Activated naive CD4-positive, alpha-beta T cell treated with anti-CD3 and anti-CD28 coated beads for 36 hours (primary cell): ENCODE measurements at regions of chr2 and their contacts with region 1.

Region 1: GRCh38 chr2:199911052-199911876 is at the start of gene C2orf69:
- DNase-seq: peak; percentile 98
- H3K4me3 Mint-ChIP-seq: peak within 1 kb of the TSS; percentile 96
- H3K27ac Mint-ChIP-seq: peak within 1 kb of the TSS; percentile 91
- H3K4me1 Mint-ChIP-seq: peaks cover 24% of the 10 kb centered on the region
- H3K27me3 Mint-ChIP-seq: peaks cover 2% of the 10 kb centered on the region
- total RNA-seq, gene C2orf69: 18.5 to 20.6 TPM

Region 2: DNA sequence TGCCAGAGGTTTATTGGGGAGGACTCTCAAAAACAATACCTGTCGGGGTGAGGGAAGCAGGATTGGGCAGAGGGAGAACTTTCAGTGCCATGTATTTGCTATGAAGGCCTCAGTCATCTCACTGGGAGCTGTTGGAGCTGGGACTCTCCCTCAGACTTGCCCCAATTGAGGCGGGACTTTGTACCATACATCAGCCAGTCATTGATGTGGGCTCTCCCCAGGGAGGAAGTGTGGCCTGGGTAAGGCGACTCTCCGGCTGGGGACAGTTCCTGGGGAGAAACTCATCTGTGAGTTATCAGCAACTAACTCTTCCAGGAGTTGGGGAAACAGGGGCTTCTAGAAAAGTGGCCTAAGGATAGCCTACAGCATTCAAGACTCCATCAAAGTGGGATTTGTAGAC is 126.8 kb before region 1 on chr2:
- CTCF ChIA-PET with region 1: no interaction called
- intact Hi-C with region 1: no loop called
- DNase-seq: no peak
- H3K4me3 Mint-ChIP-seq: no peak overlapping the region
- H3K27ac Mint-ChIP-seq: no peak overlapping the region
- H3K4me1 Mint-ChIP-seq: no peaks in the 10 kb centered on the region
- H3K27me3 Mint-ChIP-seq: no peaks in the 10 kb centered on the region

Region 3: DNA sequence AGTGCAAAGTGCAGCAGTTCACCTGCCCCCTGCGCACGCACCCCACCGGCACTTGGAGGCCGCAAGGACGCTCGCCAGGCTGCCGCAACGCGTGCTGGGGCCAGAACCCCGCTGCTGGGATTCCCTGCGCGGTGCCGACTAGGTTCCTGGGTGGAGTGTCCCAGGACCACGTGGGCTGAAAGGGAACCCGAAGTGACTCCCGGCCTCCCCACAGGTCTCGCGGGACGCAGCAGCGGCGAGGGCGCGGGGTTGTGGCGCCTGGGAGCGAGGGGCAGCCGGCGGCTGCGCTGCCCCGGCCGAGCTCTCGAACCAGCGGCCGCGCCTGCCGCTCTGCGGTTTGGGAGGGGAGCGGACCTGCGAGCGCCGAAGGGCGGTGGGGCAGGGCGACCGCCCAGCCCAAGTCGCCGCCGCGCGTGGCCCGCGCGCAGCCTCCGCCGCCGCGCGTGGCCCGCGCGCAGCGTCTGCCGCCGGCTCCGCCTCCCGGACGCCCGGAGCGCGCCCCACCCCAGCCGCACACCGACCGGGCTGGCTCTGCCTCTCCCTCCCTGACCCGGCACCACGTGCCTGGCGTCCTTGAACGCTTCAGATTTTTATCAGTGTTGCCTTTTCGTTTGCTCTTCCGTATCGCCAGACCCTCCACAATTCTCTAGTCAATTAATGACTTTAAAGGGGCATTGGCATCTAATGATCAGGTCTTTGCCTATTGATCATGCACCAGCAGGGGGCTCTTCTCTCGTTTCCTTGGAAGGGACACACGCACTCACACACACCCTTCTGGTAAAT is 60.4 kb before region 1 on chr2 and contains the start of gene FTCDNL1:
- CTCF ChIA-PET with region 1: no interaction called
- intact Hi-C with region 1: loop called (anchors 1 kb)
- DNase-seq: peak; percentile 67
- H3K4me3 Mint-ChIP-seq: peak within 1 kb of the TSS; percentile 96
- H3K27ac Mint-ChIP-seq: peak within 1 kb of the TSS; percentile 88
- H3K4me1 Mint-ChIP-seq: peaks cover 9% of the 10 kb centered on the region
- H3K27me3 Mint-ChIP-seq: no peaks in the 10 kb centered on the region
- total RNA-seq, gene FTCDNL1: 3.8 to 5.2 TPM

Region 4: DNA sequence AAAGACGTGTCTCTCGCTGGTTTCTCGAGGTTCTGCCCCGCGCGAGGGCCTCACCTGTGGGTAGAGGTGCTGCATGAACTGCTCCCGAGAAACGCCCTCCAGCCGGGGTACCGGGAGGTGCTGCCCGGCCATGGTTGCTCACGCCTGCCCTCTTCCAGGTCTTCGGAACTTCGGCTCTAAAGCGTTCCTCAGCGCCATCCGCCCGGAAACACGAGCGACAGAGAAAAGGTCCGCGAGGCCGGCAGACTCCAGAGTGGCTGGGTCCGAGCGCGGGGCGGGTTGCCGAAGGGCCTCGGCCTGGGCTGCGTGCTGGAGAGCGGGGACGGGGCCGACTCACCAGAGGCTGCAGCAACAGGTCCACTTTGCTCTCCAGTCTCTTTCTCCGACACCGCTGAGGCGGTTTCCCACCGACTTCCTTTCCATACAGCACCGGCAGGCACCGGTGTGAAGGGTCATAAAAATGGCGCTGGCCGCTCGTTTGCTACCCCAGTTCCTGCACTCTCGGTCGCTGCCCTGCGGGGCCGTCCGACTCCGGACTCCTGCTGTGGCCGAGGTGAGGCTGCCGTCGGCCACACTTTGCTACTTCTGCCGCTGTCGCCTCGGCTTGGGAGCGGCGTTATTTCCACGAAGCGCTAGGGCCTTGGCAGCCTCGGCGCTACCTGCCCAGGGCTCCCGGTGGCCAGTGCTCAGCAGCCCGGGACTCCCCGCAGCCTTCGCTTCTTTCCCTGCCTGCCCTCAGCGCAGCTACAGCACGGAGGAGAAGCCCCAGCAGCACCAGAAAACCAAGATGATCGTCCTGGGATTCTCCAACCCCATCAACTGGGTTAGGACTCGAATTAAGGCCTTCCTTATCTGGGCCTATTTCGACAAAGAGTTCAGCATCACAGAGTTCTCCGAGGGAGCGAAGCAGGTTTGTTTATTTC is 44.3 kb after region 1 on chr2 and contains the starts of genes MAIP1 and TYW5:
- CTCF ChIA-PET with region 1: interaction called, 3 read pairs
- intact Hi-C with region 1: loop called (anchors 1 kb)
- DNase-seq: peak; percentile 82
- H3K4me3 Mint-ChIP-seq: peak within 1 kb of the TSS; percentile 98
- H3K27ac Mint-ChIP-seq: peak within 1 kb of the TSS; percentile 92
- H3K4me1 Mint-ChIP-seq: peaks cover 45% of the 10 kb centered on the region
- H3K27me3 Mint-ChIP-seq: no peaks in the 10 kb centered on the region
- total RNA-seq, gene MAIP1: 28.6 to 30.0 TPM
- total RNA-seq, gene TYW5: 7.8 to 7.9 TPM

Region 5: GRCh38 chr2:200306196-200306930 is 395.1 kb after region 1 on chr2 and contains the start of gene SPATS2L:
- CTCF ChIA-PET with region 1: no interaction called
- intact Hi-C with region 1: loop called (anchors 5 kb)
- DNase-seq: peak; percentile 64
- H3K4me3 Mint-ChIP-seq: peak within 1 kb of the TSS; percentile 85
- H3K27ac Mint-ChIP-seq: peak within 1 kb of the TSS; percentile 4
- H3K4me1 Mint-ChIP-seq: peaks cover 13% of the 10 kb centered on the region
- H3K27me3 Mint-ChIP-seq: peaks cover 15% of the 10 kb centered on the region
- total RNA-seq, gene SPATS2L: 8.9 to 10.9 TPM

Region 6: GRCh38 chr2:200373973-200374416 is 462.7 kb after region 1 on chr2:
- CTCF ChIA-PET with region 1: no interaction called
- intact Hi-C with region 1: loop called (anchors 5 kb)
- DNase-seq: peak; percentile 66
- H3K4me3 Mint-ChIP-seq: peak overlapping the region; percentile 73
- H3K27ac Mint-ChIP-seq: peak overlapping the region; percentile 70
- H3K4me1 Mint-ChIP-seq: peaks cover 40% of the 10 kb centered on the region
- H3K27me3 Mint-ChIP-seq: no peaks in the 10 kb centered on the region

Region 7: DNA sequence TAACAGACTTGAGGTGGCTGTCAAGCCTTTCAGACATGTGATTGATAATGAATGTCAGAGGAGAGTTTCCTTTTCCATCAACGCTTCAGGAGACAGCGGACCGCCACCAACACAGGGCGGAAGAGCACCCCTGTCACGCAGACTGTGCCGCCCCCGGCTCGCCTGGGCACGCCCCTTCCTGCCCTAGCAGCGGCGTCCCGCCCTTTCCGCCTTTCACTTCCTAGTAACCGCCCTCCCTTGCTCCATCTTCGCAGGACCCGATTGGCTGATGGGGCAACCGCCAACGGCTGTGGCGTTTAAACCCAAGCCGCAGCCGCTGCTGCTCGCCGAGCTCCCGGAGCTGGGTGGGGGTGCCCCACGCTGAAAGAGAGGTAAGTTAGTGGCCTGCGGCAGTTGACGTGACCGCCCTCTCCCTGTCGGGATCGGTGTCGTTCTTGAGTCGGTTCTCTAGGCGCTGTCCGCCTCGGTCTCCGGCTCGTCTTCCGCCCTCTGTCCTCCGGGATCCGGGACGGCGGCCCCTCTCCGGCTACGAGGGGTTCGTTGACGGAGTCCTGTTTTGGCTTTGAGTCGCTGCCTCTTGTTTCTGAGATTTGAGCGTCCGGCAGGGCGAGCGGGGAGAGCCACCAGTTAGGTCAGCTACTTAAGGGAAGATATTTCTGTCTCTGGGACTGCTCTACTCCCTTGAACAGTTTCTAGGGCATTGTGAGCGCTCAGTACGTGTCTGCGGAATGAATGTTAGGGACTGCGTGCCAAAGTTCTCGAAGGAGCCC is 614.8 kb after region 1 on chr2 and contains the start of gene SGO2:
- CTCF ChIA-PET with region 1: no interaction called
- intact Hi-C with region 1: loop called (anchors 2 kb)
- DNase-seq: peak; percentile 98
- H3K4me3 Mint-ChIP-seq: peak within 1 kb of the TSS; percentile 90
- H3K27ac Mint-ChIP-seq: peak within 1 kb of the TSS; percentile 84
- H3K4me1 Mint-ChIP-seq: peaks cover 17% of the 10 kb centered on the region
- H3K27me3 Mint-ChIP-seq: no peaks in the 10 kb centered on the region
- total RNA-seq, gene SGO2: 39.7 to 40.0 TPM